Gastrocnemius medialis (tissue), 4 donors: ENCODE measurements at regions of chr20 and their contacts with region 1.

Region 1: DNA sequence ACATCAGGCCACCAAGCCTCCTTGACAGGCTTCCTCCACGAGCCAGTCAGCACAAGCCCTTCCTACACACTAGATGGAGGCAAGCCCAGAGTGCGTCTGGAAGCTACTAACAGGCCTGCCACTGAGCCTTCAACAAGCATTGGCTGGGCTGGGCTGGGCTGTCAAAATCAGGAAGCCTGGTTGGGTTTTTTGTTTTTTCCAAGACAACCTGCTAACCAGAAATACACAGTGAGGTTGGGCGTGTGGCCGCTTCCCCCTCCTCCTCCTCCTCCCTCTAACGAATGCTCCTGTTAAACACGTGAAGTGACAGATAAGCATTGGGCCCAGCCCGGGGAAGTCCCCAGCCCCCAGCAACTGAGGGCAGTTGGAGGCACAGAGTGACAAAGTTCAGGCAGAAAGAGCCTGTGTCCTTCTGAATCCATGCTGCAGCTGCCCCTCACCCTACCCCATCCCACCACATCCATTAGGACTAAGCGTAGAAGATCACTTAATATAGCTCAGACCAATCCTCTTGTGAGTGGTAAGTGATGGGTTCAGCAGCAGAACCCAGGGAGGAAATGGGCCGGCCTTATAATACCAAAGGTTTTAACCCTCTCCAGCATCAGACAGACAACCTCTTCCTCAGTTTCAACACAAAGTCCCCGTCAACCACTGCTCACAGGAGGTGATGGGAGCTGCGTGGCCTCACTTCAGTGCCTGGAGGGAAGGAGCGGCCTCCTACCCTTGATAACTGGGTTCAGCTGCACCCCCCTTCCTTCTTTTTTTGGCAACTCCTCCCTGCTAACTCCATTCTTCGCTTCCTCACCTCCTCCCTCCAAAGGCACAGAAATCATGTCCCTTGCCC is 1.1 kb downstream of the NFATC2 start:
- DNase-seq: peak; percentile 42 to 64
- ATAC-seq: peak; percentile 24 to 35
- H3K4me3 ChIP-seq: peak overlapping the region; percentile 35 to 62 (median 53)
- H3K27ac ChIP-seq: peak overlapping the region; percentile 75 to 93 (median 82)
- H3K4me1 ChIP-seq: peaks cover 31 to 35% of the 10 kb centered on the region in 2 donors
- H3K27me3 ChIP-seq: no peaks in the 10 kb centered on the region
- CTCF ChIP-seq: no peak
- POLR2A ChIP-seq: no peak

Region 2: GRCh38 chr20:51360451-51361221 is 180.8 kb before region 1 on chr20:
- in situ Hi-C with region 1: no loop called
- intact Hi-C with region 1: no loop called
- DNase-seq: no peak
- ATAC-seq: no peak
- H3K4me3 ChIP-seq: no peak overlapping the region
- H3K27ac ChIP-seq: no peak overlapping the region
- H3K4me1 ChIP-seq: no peaks in the 10 kb centered on the region
- H3K27me3 ChIP-seq: no peaks in the 10 kb centered on the region
- CTCF ChIP-seq: no peak
- POLR2A ChIP-seq: no peak

Region 3: GRCh38 chr20:51562332-51563155 is 21.1 kb after region 1 on chr20:
- in situ Hi-C with region 1: no loop called
- intact Hi-C with region 1: loop called (anchors 2 kb)
- DNase-seq: peak; percentile 36 to 41
- ATAC-seq: peak; percentile 56 to 61
- H3K4me3 ChIP-seq: peak overlapping the region; percentile 57 to 72 (median 64)
- H3K27ac ChIP-seq: peak overlapping the region; percentile 45 to 83 (median 72)
- H3K4me1 ChIP-seq: peaks cover 35 to 37% of the 10 kb centered on the region in 2 donors
- H3K27me3 ChIP-seq: no peaks in the 10 kb centered on the region
- CTCF ChIP-seq: peak in 4 of 5 experiments; percentile 12 to 40 (median 23)
- POLR2A ChIP-seq: peak; percentile 12 to 42